H1 (cell line): ENCODE measurements at regions of chr7 and their contacts with region 1.

Region 1: GRCh38 chr7:105759670-105760550 is 116.5 kb downstream of the ATXN7L1 start:
- DNase-seq: no peak
- H3K4me3 ChIP-seq: no peak overlapping the region
- H3K27ac ChIP-seq: no peak overlapping the region
- H3K4me1 ChIP-seq: peaks cover 1 to 13% (median 4%) of the 10 kb centered on the region in 4 experiments; a peak in 4 of 7 replicates
- H3K27me3 ChIP-seq: no peaks in the 10 kb centered on the region
- CTCF ChIP-seq: peak in 2 of 3 experiments; percentile 45 to 47; a peak in 2 of 4 replicates
- EP300 ChIP-seq: no peak
- POLR2A ChIP-seq: no peak
- RAD21 ChIP-seq: peak; percentile 65 to 69

Region 2: DNA sequence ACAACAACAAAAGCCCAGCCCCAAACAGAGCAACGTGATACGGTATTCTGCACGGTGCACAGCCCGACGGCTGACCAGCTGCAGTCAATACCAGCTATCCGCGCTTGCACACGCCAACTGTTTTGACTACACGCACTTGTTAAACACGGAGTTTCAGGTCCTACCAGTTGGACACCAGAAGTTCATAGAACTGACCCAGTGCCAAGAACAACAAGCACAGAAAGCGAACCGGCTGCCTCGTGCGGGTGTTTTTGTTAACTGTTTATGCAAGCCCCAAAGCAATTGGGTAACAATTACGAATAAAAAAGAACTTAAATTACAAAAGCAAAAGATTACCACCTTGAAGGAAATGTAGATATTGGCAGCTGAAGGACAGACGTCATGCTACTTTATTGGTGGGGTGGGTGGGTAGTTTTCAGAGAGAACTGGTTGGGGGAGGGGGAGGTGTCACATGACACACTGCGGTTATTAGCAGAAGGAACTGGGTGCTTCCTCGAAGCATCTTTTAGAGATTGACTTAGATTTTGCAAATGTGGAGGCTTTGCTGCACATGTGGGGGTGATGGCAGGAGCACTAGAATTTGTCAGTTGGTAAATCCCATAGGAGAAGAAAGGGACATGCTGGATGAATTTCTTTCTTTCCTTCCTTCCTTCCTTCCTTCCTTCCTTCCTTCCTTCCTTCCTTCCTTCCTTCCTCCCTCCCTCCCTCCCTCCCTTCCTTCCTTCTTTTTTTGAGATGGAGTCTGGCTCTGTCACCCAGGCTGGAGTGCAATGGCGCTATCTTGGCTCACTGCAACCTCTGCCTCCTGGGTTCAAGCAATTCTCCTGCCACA is 68.0 kb before region 1 on chr7:
- CTCF ChIA-PET with region 1: interaction called, 34 read pairs
- POLR2A ChIA-PET with region 1: interaction called, 3 read pairs
- DNase-seq: no peak
- H3K4me3 ChIP-seq: peak overlapping the region; percentile 11 to 48 (median 30); a peak in 5 of 8 replicates
- H3K27ac ChIP-seq: peak overlapping the region; percentile 42; the same call in 1 of the 2 replicates
- H3K4me1 ChIP-seq: peaks cover 31 to 48% (median 40%) of the 10 kb centered on the region in 4 experiments
- H3K27me3 ChIP-seq: no peaks in the 10 kb centered on the region
- CTCF ChIP-seq: no peak
- EP300 ChIP-seq: no peak
- POLR2A ChIP-seq: no peak
- RAD21 ChIP-seq: no peak

Region 3: GRCh38 chr7:105743351-105744090 is 16.4 kb before region 1 on chr7:
- CTCF ChIA-PET with region 1: interaction called, 307 read pairs
- POLR2A ChIA-PET with region 1: no interaction called
- DNase-seq: no peak
- H3K4me3 ChIP-seq: no peak overlapping the region
- H3K27ac ChIP-seq: no peak overlapping the region
- H3K4me1 ChIP-seq: peaks cover 0 to 13% (median 6%) of the 10 kb centered on the region in 4 experiments; a peak in 5 of 7 replicates
- H3K27me3 ChIP-seq: no peaks in the 10 kb centered on the region
- CTCF ChIP-seq: no peak
- EP300 ChIP-seq: no peak
- POLR2A ChIP-seq: no peak
- RAD21 ChIP-seq: no peak

Region 4: DNA sequence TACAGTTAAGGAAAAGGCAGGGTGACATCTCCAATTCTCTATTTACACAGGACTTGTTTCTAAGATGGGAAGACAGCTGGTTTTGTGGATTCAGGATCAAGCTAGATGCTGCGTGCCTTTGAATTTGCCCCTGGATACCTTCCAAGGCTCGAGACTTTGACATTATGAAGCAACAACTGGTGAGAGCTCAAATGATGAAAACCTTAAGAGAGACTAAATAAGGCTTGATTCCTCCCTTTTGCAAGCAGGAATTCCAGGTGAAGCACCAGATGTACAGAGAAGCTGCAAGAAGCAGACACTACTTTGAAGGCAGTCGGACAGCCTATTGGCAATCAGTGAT is 35.5 kb after region 1 on chr7:
- CTCF ChIA-PET with region 1: interaction called, 107 read pairs
- POLR2A ChIA-PET with region 1: no interaction called
- DNase-seq: no peak
- H3K4me3 ChIP-seq: no peak overlapping the region
- H3K27ac ChIP-seq: no peak overlapping the region
- H3K4me1 ChIP-seq: peaks cover 3 to 20% (median 6%) of the 10 kb centered on the region in 4 experiments; a peak in 5 of 7 replicates
- H3K27me3 ChIP-seq: no peaks in the 10 kb centered on the region
- CTCF ChIP-seq: no peak
- EP300 ChIP-seq: no peak
- POLR2A ChIP-seq: no peak
- RAD21 ChIP-seq: no peak

Region 5: GRCh38 chr7:106031300-106032035 is 271.6 kb after region 1 on chr7:
- CTCF ChIA-PET with region 1: interaction called, 20 read pairs
- POLR2A ChIA-PET with region 1: interaction called, 3 read pairs
- DNase-seq: no peak
- H3K4me3 ChIP-seq: no peak overlapping the region; a peak in 1 of 8 replicates
- H3K27ac ChIP-seq: no peak overlapping the region
- H3K4me1 ChIP-seq: peaks cover 0 to 16% (median 5%) of the 10 kb centered on the region in 4 experiments; a peak in 5 of 7 replicates
- H3K27me3 ChIP-seq: no peaks in the 10 kb centered on the region
- CTCF ChIP-seq: no peak
- EP300 ChIP-seq: no peak
- POLR2A ChIP-seq: no peak
- RAD21 ChIP-seq: no peak